Endothelial cell of umbilical vein (primary cell): ENCODE measurements at regions of chr7 and their contacts with region 1.

Region 1: DNA sequence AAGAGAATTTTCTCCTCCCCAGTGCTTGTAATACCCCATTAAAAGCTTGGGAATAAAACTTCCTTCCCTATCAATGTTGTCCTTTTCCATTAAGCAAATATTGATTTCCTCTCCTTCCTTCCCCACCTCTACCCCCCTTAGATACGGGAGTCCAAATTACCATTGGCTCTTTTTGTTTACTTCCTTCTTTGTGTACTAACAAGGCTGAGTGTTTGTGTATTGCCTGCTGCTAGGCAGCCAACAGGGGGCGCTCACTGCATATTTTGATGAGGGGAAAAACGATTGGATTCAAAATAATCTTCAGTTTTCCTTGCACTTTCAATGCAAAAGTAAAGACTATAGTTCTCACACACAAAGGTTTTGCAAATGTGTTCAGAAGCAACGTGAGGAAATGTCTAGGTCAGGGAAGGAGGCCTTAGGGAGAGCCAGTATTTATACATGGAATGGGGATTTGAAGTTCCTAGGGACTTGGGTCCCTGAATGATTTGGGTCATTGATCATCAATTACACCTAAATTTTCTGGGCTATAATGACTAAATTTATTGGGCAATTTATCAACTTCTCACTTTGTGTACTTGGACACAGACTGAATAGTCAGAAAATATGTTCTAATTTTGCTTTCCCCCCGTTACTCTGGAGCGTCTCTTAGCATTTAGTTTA is 23.6 kb upstream of the VPS41 start:
- DNase-seq: peak; percentile 45
- H3K4me3 ChIP-seq: no peak overlapping the region
- H3K27ac ChIP-seq: no peak overlapping the region
- H3K4me1 ChIP-seq: peaks cover 12% of the 10 kb centered on the region
- H3K27me3 ChIP-seq: no peaks in the 10 kb centered on the region
- CTCF ChIP-seq: peak; percentile 80 to 90
- POLR2A ChIP-seq: no peak

Region 2: GRCh38 chr7:38630720-38631673 is 301.6 kb before region 1 on chr7 and contains the start of gene AMPH:
- CTCF ChIA-PET with region 1: no interaction called
- POLR2A ChIA-PET with region 1: no interaction called
- dilution Hi-C with region 1: no loop called
- intact Hi-C with region 1: no loop called
- DNase-seq: peak; percentile 45
- H3K4me3 ChIP-seq: peak within 1 kb of the TSS; percentile 67 to 84 (median 76)
- H3K27ac ChIP-seq: no peak within 1 kb of the TSS
- H3K4me1 ChIP-seq: peaks cover 12% of the 10 kb centered on the region
- H3K27me3 ChIP-seq: peaks cover 4 to 5% of the 10 kb centered on the region in 2 experiments
- CTCF ChIP-seq: no peak
- POLR2A ChIP-seq: no peak
- total RNA-seq, gene AMPH: 8.0 and 9.2 TPM in 2 replicates

Region 3: GRCh38 chr7:39336442-39336841 is 403.8 kb after region 1 on chr7:
- CTCF ChIA-PET with region 1: no interaction called
- POLR2A ChIA-PET with region 1: no interaction called
- dilution Hi-C with region 1: no loop called
- intact Hi-C with region 1: loop called (anchors 10 kb)
- DNase-seq: no peak
- H3K4me3 ChIP-seq: no peak overlapping the region
- H3K27ac ChIP-seq: no peak overlapping the region
- H3K4me1 ChIP-seq: no peaks in the 10 kb centered on the region
- H3K27me3 ChIP-seq: peaks cover 0 to 3% of the 10 kb centered on the region in 2 experiments
- CTCF ChIP-seq: no peak
- POLR2A ChIP-seq: no peak

Region 4: GRCh38 chr7:39465055-39465929 is 532.7 kb after region 1 on chr7:
- CTCF ChIA-PET with region 1: no interaction called
- POLR2A ChIA-PET with region 1: no interaction called
- dilution Hi-C with region 1: no loop called
- intact Hi-C with region 1: loop called (anchors 1 kb)
- DNase-seq: peak; percentile 26
- H3K4me3 ChIP-seq: no peak overlapping the region
- H3K27ac ChIP-seq: no peak overlapping the region
- H3K4me1 ChIP-seq: no peaks in the 10 kb centered on the region
- H3K27me3 ChIP-seq: peaks cover 3 to 12% of the 10 kb centered on the region in 2 experiments
- CTCF ChIP-seq: peak; percentile 43 to 61
- POLR2A ChIP-seq: no peak

Region 5: DNA sequence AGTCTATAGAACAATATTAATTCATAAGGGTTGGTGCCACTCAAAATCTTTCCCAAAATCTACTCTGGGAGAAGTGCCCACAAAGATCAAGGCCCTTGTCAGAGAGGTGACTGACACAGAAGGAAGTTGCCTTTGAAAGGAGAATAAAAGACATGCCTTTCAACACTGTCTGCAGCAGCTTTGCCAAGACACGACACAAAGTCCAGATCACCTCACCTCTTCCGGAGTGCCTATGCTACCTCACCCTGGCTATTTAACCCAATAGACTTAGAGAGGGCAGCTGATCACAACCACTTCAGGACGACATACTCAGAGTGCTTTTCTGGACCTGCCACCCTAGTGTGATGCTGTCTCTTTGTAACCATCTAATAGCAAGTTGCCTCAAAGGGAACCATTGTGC is 584.6 kb after region 1 on chr7:
- CTCF ChIA-PET with region 1: interaction called, 3 read pairs
- POLR2A ChIA-PET with region 1: no interaction called
- dilution Hi-C with region 1: no loop called
- intact Hi-C with region 1: loop called (anchors 1 kb)
- DNase-seq: no peak
- H3K4me3 ChIP-seq: no peak overlapping the region
- H3K27ac ChIP-seq: no peak overlapping the region
- H3K4me1 ChIP-seq: no peaks in the 10 kb centered on the region
- H3K27me3 ChIP-seq: peaks cover 2 to 3% of the 10 kb centered on the region in 2 experiments
- CTCF ChIP-seq: no peak
- POLR2A ChIP-seq: no peak

Region 6: GRCh38 chr7:39566023-39566921 is 633.6 kb after region 1 on chr7 and contains the start of gene YAE1:
- CTCF ChIA-PET with region 1: no interaction called
- POLR2A ChIA-PET with region 1: no interaction called
- dilution Hi-C with region 1: no loop called
- intact Hi-C with region 1: no loop called
- DNase-seq: peak; percentile 75
- H3K4me3 ChIP-seq: peak within 1 kb of the TSS; percentile 54 to 91 (median 68)
- H3K27ac ChIP-seq: peak within 1 kb of the TSS; percentile 31
- H3K4me1 ChIP-seq: peaks cover 11% of the 10 kb centered on the region
- H3K27me3 ChIP-seq: no peaks in the 10 kb centered on the region
- CTCF ChIP-seq: no peak
- POLR2A ChIP-seq: peak; percentile 75
- total RNA-seq, gene YAE1: 20.6 and 20.7 TPM in 2 replicates